MCF 10A (cell line): ENCODE measurements at regions of chr17 and their contacts with region 1.

Region 1: GRCh38 chr17:48724251-48725003 is 1.4 kb downstream of the PRAC2 start:
- DNase-seq: peak; percentile 78
- H3K4me3 Mint-ChIP-seq: peak overlapping the region; percentile 17
- H3K27ac Mint-ChIP-seq: no peak overlapping the region
- H3K4me1 Mint-ChIP-seq: peaks cover 11% of the 10 kb centered on the region
- H3K27me3 Mint-ChIP-seq: peaks cover 56% of the 10 kb centered on the region
- CTCF ChIP-seq: peak; percentile 74

Region 2: DNA sequence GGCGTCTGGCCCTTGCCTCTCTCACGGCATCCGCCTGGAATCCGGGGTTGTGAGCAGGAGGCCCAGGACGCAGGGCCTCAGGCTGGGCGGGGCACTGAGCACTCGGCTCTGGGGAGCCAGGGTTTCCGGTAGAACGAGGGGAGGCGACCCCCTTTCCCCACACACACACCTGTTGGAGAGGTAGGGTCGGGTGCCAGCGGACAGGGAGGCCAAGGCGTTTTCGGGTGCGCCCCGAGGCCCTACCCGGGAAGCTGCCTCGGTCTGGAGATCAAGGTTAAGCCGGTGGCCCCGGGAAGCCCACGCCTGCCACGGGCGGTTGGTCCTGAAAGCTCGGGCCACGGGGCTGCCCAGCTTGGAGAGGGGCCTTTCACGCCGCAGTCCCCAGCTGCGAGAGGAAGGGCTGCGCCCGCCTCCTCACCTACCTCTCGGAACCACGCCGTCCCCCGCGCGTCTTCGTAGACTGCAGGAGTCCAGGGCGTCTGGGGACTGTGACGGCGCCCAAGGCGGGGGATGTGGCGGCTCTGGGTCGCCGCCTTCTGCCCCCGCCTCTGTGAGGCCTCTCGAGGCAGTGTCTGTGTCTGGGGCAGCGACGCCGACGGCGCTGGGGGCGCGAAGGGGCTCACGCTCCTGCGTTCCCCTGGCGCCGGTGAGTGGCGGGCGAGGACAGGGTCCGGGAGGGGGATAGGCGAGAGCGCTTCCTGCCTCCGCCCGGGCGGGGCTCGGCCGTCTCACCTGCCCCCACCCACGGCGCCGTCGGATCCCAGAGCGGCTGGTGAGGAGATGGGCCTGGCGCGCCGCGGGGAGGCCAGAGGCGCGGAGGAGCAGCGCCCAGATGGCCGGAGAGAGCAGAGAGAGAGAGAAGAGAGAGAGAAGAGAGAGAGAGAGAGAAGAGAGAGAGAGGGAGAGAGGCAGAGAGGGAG is 78.0 kb before region 1 on chr17:
- CTCF ChIA-PET with region 1: no interaction called
- POLR2A ChIA-PET with region 1: no interaction called
- intact Hi-C with region 1: no loop called
- DNase-seq: no peak
- H3K4me3 Mint-ChIP-seq: no peak overlapping the region
- H3K27ac Mint-ChIP-seq: no peak overlapping the region
- H3K4me1 Mint-ChIP-seq: peaks cover 6% of the 10 kb centered on the region
- H3K27me3 Mint-ChIP-seq: peaks cover 87% of the 10 kb centered on the region
- CTCF ChIP-seq: no peak

Region 3: DNA sequence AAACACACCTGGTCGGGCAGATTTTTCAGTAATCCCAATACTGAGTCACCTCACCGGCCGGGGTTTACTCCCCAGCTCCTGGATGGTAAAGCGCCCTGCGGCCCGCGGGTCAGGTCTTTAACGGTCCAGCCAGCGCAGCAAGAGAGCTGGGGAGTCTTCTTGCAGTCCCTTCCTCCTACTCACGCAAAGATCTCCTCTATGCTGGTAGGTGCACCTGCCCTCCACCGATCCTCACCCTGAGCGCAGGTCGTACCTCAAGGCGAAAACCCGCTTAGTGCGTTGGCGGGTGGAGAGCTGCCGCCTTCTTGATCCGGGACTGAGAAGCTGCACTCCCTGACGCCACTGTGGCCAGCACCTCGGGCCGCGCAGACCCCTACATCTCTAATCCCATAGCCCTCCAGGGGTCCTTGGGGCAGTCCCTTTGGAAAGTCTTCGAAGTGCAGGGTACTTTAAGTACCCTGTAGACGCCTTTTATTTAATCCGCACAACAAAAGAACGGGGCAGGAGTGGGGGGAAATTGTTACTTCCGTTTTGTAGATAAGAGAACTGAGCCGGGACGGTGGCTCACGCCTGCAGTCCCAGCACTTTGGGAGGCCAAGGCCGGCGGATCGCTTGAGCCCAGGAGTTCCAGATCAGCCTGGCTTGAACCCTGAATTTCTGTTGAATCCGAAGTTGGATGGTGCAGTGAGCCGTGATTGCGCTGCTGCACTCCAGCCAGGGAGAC is 14.5 kb after region 1 on chr17:
- CTCF ChIA-PET with region 1: interaction called, 10 read pairs
- POLR2A ChIA-PET with region 1: interaction called, 5 read pairs
- intact Hi-C with region 1: no loop called
- DNase-seq: no peak
- H3K4me3 Mint-ChIP-seq: no peak overlapping the region
- H3K27ac Mint-ChIP-seq: no peak overlapping the region
- H3K4me1 Mint-ChIP-seq: no peaks in the 10 kb centered on the region
- H3K27me3 Mint-ChIP-seq: peaks cover 100% of the 10 kb centered on the region
- CTCF ChIP-seq: no peak

Region 4: GRCh38 chr17:48756830-48757251 is 32.4 kb after region 1 on chr17:
- CTCF ChIA-PET with region 1: no interaction called
- POLR2A ChIA-PET with region 1: no interaction called
- intact Hi-C with region 1: no loop called
- DNase-seq: no peak
- H3K4me3 Mint-ChIP-seq: no peak overlapping the region
- H3K27ac Mint-ChIP-seq: no peak overlapping the region
- H3K4me1 Mint-ChIP-seq: no peaks in the 10 kb centered on the region
- H3K27me3 Mint-ChIP-seq: peaks cover 82% of the 10 kb centered on the region
- CTCF ChIP-seq: no peak